MCF 10A (cell line): ENCODE measurements at regions of chr22 and their contacts with region 1.

Region 1: GRCh38 chr22:22195265-22196017 is 49.1 kb upstream of the VPREB1 start:
- DNase-seq: peak; percentile 87
- H3K4me3 Mint-ChIP-seq: no peak overlapping the region
- H3K27ac Mint-ChIP-seq: no peak overlapping the region
- H3K4me1 Mint-ChIP-seq: no peaks in the 10 kb centered on the region
- H3K27me3 Mint-ChIP-seq: peaks cover 70% of the 10 kb centered on the region
- CTCF ChIP-seq: peak; percentile 95

Region 2: DNA sequence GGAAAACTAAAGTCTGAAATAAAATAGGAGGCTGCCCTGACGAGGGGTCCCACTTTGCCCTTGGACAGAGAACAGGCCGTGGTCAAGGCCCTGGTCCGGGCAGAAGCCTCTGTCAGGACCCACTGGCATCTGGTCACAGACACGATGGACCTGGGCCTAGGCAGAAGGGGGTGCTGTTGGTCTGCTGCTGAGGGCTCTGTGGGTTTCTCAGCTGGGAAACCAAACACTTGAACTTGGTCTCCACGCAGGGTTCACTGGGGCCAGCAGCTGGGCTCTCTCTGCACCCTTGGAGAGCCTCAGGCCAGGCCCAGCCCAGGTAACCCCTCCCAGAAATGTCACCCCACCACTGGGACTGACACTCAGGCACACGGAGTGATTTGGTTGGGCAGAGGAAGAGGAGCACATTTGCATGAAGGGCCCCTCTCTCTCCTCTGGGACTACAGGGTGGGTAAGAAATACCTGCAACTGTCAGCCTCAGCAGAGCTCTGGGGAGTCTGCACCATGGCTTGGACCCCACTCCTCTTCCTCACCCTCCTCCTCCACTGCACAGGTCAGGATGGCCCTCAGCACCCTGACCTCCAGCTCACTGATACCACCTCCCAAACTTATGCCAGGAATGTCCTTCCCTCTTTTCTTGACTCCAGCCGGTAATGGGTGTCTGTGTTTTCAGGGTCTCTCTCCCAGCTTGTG is 164.8 kb before region 1 on chr22:
- CTCF ChIA-PET with region 1: interaction called, 3 read pairs
- POLR2A ChIA-PET with region 1: no interaction called
- intact Hi-C with region 1: loop called (anchors 1 kb)
- DNase-seq: peak; percentile 13
- H3K4me3 Mint-ChIP-seq: no peak overlapping the region
- H3K27ac Mint-ChIP-seq: no peak overlapping the region
- H3K4me1 Mint-ChIP-seq: no peaks in the 10 kb centered on the region
- H3K27me3 Mint-ChIP-seq: peaks cover 35% of the 10 kb centered on the region
- CTCF ChIP-seq: peak; percentile 17

Region 3: GRCh38 chr22:22060200-22061084 is 135.0 kb before region 1 on chr22:
- CTCF ChIA-PET with region 1: interaction called, 6 read pairs
- POLR2A ChIA-PET with region 1: no interaction called
- intact Hi-C with region 1: loop called (anchors 1 kb)
- DNase-seq: peak; percentile 61
- H3K4me3 Mint-ChIP-seq: no peak overlapping the region
- H3K27ac Mint-ChIP-seq: no peak overlapping the region
- H3K4me1 Mint-ChIP-seq: peaks cover 9% of the 10 kb centered on the region
- H3K27me3 Mint-ChIP-seq: peaks cover 26% of the 10 kb centered on the region
- CTCF ChIP-seq: peak; percentile 89

Region 4: GRCh38 chr22:22161924-22162851 is 33.3 kb before region 1 on chr22:
- CTCF ChIA-PET with region 1: interaction called, 13 read pairs
- POLR2A ChIA-PET with region 1: no interaction called
- intact Hi-C with region 1: no loop called
- DNase-seq: no peak
- H3K4me3 Mint-ChIP-seq: no peak overlapping the region
- H3K27ac Mint-ChIP-seq: no peak overlapping the region
- H3K4me1 Mint-ChIP-seq: no peaks in the 10 kb centered on the region
- H3K27me3 Mint-ChIP-seq: peaks cover 79% of the 10 kb centered on the region
- CTCF ChIP-seq: no peak

Region 5: DNA sequence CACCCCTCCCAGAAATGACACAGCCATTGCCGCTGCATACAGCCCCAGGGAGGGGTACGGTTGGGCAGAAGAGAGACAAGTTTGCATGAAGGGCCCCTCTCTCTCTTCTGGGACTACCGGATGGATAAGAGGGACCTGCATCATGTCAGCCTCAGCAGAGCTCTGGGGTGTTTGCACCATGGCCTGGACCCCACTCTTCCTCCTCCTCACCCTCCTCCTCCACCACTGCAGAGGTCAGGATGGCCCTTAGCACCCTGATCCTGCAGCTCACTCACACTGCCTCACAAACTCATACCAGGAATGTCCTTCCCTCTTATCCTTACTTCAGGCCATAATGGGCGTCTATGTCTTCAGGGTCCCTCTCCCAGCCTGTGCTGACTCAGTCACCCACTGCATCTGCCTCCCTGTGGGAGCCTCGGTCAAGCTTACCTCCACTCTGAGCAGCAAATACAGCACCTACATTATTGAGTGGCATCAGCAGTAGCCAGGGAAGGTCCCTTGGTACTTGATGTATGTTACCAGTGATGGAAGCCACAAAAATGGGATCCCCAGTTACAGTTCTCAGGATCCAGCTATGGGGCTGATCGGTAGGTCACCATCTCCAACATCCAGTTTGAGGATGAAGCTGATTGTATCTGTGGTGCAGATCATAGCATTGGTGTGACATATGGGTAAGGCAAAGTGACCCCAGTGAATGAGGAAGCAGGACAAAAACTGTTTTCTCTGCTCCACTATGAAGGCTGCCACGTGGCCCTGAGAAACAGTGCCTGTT is 13.0 kb before region 1 on chr22:
- CTCF ChIA-PET with region 1: interaction called, 32 read pairs
- POLR2A ChIA-PET with region 1: interaction called, 3 read pairs
- intact Hi-C with region 1: no loop called
- DNase-seq: no peak
- H3K4me3 Mint-ChIP-seq: no peak overlapping the region
- H3K27ac Mint-ChIP-seq: no peak overlapping the region
- H3K4me1 Mint-ChIP-seq: no peaks in the 10 kb centered on the region
- H3K27me3 Mint-ChIP-seq: peaks cover 85% of the 10 kb centered on the region
- CTCF ChIP-seq: no peak

Region 6: GRCh38 chr22:22207845-22208564 is 12.6 kb after region 1 on chr22:
- CTCF ChIA-PET with region 1: interaction called, 12 read pairs
- POLR2A ChIA-PET with region 1: interaction called, 4 read pairs
- intact Hi-C with region 1: no loop called
- DNase-seq: peak; percentile 81
- H3K4me3 Mint-ChIP-seq: no peak overlapping the region
- H3K27ac Mint-ChIP-seq: no peak overlapping the region
- H3K4me1 Mint-ChIP-seq: peaks cover 18% of the 10 kb centered on the region
- H3K27me3 Mint-ChIP-seq: no peaks in the 10 kb centered on the region
- CTCF ChIP-seq: peak; percentile 76

Region 7: DNA sequence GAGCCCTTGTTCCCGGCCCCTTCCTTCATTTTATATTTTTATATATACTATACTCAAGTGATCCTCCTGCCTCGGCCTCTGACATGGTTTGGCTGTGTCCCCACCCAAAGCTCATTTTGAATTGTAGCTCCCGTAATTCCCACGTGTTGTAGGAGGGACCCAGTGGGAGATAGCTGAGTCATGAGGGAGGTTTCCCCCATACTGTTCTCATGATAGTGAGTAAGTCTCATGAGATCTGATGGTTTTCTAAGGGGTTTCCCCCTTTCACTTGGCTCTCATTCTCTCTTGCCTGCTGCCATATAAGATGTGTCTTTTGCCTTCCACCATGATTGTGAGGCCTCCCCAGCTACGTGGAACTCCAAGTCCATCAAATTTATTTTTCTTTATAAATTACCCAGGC is 331.9 kb after region 1 on chr22:
- CTCF ChIA-PET with region 1: no interaction called
- POLR2A ChIA-PET with region 1: no interaction called
- intact Hi-C with region 1: no loop called
- DNase-seq: no peak
- H3K4me3 Mint-ChIP-seq: no peak overlapping the region
- H3K27ac Mint-ChIP-seq: no peak overlapping the region
- H3K4me1 Mint-ChIP-seq: no peaks in the 10 kb centered on the region
- H3K27me3 Mint-ChIP-seq: peaks cover 28% of the 10 kb centered on the region
- CTCF ChIP-seq: no peak